K562 (cell line): ENCODE measurements at regions of chr1 and their contacts with region 1.

Region 1: GRCh38 chr1:205800981-205801703 is 11.9 kb downstream of the SLC41A1 start:
- DNase-seq: peak in 2 of 4 experiments; percentile 30 to 45
- ATAC-seq: peak; percentile 64
- H3K4me3 ChIP-seq: no peak overlapping the region
- H3K27ac ChIP-seq: no peak overlapping the region
- H3K4me1 ChIP-seq: peaks cover 8 to 22% of the 10 kb centered on the region in 2 experiments; a peak in 4 of 5 replicates
- H3K27me3 ChIP-seq: no peaks in the 10 kb centered on the region
- CTCF ChIP-seq: no peak
- EP300 ChIP-seq: no peak
- POLR2A ChIP-seq: no peak
- RAD21 ChIP-seq: no peak

Region 2: DNA sequence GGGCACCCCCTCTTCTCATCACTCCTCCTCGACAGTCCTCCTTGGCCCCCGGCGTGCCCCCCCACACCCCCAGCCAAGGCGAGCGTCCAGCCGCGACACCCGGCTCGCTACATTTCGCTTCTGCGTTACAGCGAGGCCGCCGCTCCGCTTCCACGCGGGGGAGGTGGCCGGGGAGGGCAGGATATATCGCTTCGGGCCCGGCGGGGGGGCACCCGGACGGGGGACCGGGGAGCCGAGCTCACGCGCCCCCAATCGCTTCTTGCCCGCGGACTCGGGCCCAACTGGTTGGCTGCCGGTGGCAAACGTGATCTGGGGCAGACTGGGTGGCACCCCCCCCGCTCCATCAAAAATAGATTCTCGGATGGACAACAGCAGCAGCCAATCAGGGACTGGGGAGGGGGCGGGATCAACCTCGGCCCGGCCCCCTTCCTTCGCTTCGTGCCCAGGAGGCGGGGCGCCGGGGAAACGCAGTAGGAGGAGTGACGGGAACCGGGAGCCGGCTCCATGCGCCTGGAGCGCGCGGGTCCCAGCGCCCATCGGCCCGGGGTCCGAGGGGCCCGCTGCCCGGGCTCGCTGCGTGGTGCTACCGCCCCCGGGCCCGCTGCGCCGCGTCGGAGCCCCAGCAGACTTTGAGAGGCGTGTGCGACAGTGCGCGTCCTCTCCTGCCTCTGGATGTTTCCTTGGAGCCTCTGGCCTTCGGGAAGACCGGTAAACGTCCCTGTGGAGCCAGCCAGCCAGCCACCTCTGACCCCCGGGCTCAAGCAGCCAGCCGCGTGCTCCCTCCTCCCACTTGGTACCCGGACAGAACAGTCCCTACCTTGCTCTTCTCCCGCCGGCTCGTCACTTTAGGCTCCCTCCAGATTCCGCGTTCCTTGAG is 12.0 kb after region 1 on chr1 and contains the start of gene SLC41A1:
- CTCF ChIA-PET with region 1: no interaction called
- POLR2A ChIA-PET with region 1: interaction called, 15 read pairs
- in situ Hi-C with region 1: no loop called
- intact Hi-C with region 1: no loop called
- DNase-seq: peak; percentile 95 to 100 (median 100)
- ATAC-seq: peak; percentile 95
- H3K4me3 ChIP-seq: peak within 1 kb of the TSS; percentile 85
- H3K27ac ChIP-seq: peak within 1 kb of the TSS; percentile 60
- H3K4me1 ChIP-seq: peaks cover 32 to 41% of the 10 kb centered on the region in 2 experiments; a peak in 4 of 5 replicates
- H3K27me3 ChIP-seq: no peaks in the 10 kb centered on the region
- CTCF ChIP-seq: no peak
- EP300 ChIP-seq: no peak
- POLR2A ChIP-seq: peak; percentile 68
- RAD21 ChIP-seq: no peak
- polyA plus RNA-seq, gene SLC41A1: 4.1 to 5.5 TPM

Region 3: GRCh38 chr1:205907794-205908193 is 106.7 kb after region 1 on chr1:
- CTCF ChIA-PET with region 1: no interaction called
- POLR2A ChIA-PET with region 1: no interaction called
- in situ Hi-C with region 1: no loop called
- intact Hi-C with region 1: no loop called
- DNase-seq: peak in 3 of 4 experiments; percentile 7 to 36 (median 14)
- ATAC-seq: peak; percentile 85
- H3K4me3 ChIP-seq: no peak overlapping the region
- H3K27ac ChIP-seq: no peak overlapping the region
- H3K4me1 ChIP-seq: no peaks in the 10 kb centered on the region
- H3K27me3 ChIP-seq: peaks cover 3 to 5% of the 10 kb centered on the region in 2 experiments; a peak in 4 of 5 replicates
- CTCF ChIP-seq: peak; percentile 59 to 72 (median 63)
- EP300 ChIP-seq: no peak
- POLR2A ChIP-seq: no peak
- RAD21 ChIP-seq: peak; percentile 64 to 71

Region 4: GRCh38 chr1:205983925-205984725 is 183.0 kb after region 1 on chr1:
- CTCF ChIA-PET with region 1: no interaction called
- POLR2A ChIA-PET with region 1: no interaction called
- in situ Hi-C with region 1: loop called (anchors 5 kb)
- intact Hi-C with region 1: no loop called
- DNase-seq: peak; percentile 62 to 72 (median 70)
- ATAC-seq: peak; percentile 97
- H3K4me3 ChIP-seq: no peak overlapping the region
- H3K27ac ChIP-seq: no peak overlapping the region
- H3K4me1 ChIP-seq: no peaks in the 10 kb centered on the region; a peak in 1 of 5 replicates
- H3K27me3 ChIP-seq: peaks cover 8 to 44% of the 10 kb centered on the region in 2 experiments; a peak in 4 of 5 replicates
- CTCF ChIP-seq: peak; percentile 87 to 93 (median 91)
- EP300 ChIP-seq: no peak
- POLR2A ChIP-seq: no peak
- RAD21 ChIP-seq: peak; percentile 85 to 88

Region 5: GRCh38 chr1:206125346-206125745 is 324.2 kb after region 1 on chr1:
- CTCF ChIA-PET with region 1: no interaction called
- POLR2A ChIA-PET with region 1: no interaction called
- in situ Hi-C with region 1: no loop called
- intact Hi-C with region 1: no loop called
- DNase-seq: no peak
- ATAC-seq: no peak
- H3K4me3 ChIP-seq: no peak overlapping the region
- H3K27ac ChIP-seq: no peak overlapping the region
- H3K4me1 ChIP-seq: no peaks in the 10 kb centered on the region
- H3K27me3 ChIP-seq: peaks cover 13 to 28% of the 10 kb centered on the region in 2 experiments; a peak in 4 of 5 replicates
- CTCF ChIP-seq: no peak
- EP300 ChIP-seq: no peak
- POLR2A ChIP-seq: no peak
- RAD21 ChIP-seq: no peak